Vagina (tissue), 2 donors: ENCODE measurements at regions of chr10 and their contacts with region 1.

Region 1: DNA sequence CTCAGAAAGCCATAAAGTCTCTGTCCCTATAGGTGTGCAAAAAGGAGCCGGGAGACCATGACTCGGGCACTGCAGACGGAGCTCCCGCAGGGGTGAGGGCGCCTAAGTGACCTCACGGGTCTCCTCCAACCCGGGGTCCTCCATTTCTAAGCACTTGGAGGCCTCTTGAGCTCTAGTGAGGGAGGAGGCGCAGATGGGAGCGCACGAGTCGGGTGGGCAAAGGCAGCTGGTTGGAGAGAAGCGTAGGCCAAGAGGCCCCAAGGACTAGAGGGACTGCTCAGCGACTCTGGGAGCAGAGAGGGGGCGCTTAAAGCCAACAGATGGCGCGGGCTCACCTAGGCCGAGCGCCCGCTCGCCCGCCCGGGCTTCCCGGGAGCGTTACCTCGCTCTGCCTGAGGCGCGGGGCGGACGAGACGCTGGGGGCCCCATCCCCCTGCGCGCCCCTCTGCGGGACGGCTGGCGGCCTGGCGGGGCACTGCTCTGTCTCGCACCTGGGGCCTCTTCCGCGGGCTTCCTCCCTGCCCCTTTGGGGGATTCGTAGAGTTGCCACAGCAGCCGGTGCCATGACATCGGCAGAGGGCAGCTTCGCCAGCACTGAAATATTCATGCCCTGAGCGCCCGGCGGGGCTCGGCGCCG is 518 bp upstream of the CDH23 start:
- DNase-seq: peak in 1 of 2 donors; percentile 77
- H3K4me3 ChIP-seq: peak overlapping the region; percentile 48 to 67
- H3K27ac ChIP-seq: peak overlapping the region; percentile 86
- H3K4me1 ChIP-seq: peaks cover 13% of the 10 kb centered on the region
- H3K27me3 ChIP-seq: no peaks in the 10 kb centered on the region
- CTCF ChIP-seq: peak; percentile 29 to 46 (median 43)
- POLR2A ChIP-seq: no peak

Region 2: DNA sequence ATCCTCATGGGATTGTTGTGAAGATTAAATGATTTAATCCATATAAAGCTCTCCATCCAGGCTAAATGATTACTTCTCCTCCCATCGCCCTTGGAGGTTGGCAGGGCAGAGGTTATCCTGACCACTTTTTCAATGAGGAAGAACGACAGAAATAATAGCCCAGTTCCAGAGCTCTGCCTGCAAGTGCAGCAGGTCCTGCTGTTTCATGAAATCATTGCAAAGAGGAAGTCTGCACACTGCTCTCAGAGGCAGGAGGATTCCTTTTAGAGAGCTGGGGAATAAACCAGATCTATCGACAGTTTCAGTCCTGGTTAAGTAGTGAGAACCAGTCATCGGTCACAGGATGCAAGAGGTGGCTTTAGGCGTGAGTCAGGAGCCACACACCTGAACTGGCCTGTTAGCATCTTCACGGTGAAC is 24.4 kb before region 1 on chr10:
- intact Hi-C with region 1: no loop called
- DNase-seq: no peak
- H3K4me3 ChIP-seq: no peak overlapping the region
- H3K27ac ChIP-seq: no peak overlapping the region
- H3K4me1 ChIP-seq: peaks cover 2% of the 10 kb centered on the region
- H3K27me3 ChIP-seq: no peaks in the 10 kb centered on the region
- CTCF ChIP-seq: no peak
- POLR2A ChIP-seq: no peak

Region 3: DNA sequence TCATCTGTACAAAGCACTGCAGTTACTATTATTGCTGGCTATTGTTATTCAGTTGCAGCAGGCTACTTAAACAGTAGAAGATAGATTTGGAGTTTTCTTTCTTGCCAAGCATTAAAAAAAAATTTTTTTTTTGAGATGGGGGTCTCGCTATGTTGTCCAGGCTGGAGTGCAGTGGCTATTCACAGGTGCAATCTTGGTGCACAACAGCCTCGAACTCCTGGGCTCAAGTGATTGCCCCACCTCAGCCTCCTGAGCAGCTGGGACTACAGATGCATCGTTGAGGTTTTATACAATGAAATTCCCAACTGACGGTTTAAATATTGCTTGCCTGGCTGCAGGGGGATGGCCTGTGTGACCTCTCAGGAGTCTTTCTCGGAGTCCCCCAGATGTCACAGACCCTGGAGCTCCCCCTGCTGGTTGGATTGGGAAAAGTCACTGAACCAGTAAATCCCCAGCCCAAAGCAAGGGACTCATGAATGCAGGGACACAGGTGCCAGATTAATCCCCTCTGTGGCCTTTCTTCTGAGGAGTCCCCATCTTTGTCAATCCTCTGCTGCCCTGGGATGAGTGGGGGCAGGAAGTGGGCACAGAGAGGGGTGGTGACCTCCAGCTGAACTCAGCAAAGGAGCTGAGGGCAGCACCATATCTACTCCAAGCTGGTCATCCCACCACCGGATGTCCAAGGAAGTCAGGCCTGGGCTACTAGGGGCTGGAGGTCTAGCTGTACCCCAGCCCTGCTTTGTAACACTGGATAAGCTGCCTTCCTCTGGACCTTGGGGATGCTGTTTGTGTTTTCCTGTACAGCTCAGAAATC is 173.8 kb after region 1 on chr10:
- intact Hi-C with region 1: loop called (anchors 5 kb)
- DNase-seq: no peak
- H3K4me3 ChIP-seq: no peak overlapping the region
- H3K27ac ChIP-seq: no peak overlapping the region
- H3K4me1 ChIP-seq: no peaks in the 10 kb centered on the region
- H3K27me3 ChIP-seq: no peaks in the 10 kb centered on the region
- CTCF ChIP-seq: peak; percentile 88 to 89 (median 89)
- POLR2A ChIP-seq: no peak

Region 4: GRCh38 chr10:71603150-71603549 is 206.9 kb after region 1 on chr10:
- intact Hi-C with region 1: loop called (anchors 2 kb)
- DNase-seq: no peak
- H3K4me3 ChIP-seq: no peak overlapping the region
- H3K27ac ChIP-seq: no peak overlapping the region
- H3K4me1 ChIP-seq: peaks cover 16% of the 10 kb centered on the region
- H3K27me3 ChIP-seq: no peaks in the 10 kb centered on the region
- CTCF ChIP-seq: no peak
- POLR2A ChIP-seq: no peak

Region 5: DNA sequence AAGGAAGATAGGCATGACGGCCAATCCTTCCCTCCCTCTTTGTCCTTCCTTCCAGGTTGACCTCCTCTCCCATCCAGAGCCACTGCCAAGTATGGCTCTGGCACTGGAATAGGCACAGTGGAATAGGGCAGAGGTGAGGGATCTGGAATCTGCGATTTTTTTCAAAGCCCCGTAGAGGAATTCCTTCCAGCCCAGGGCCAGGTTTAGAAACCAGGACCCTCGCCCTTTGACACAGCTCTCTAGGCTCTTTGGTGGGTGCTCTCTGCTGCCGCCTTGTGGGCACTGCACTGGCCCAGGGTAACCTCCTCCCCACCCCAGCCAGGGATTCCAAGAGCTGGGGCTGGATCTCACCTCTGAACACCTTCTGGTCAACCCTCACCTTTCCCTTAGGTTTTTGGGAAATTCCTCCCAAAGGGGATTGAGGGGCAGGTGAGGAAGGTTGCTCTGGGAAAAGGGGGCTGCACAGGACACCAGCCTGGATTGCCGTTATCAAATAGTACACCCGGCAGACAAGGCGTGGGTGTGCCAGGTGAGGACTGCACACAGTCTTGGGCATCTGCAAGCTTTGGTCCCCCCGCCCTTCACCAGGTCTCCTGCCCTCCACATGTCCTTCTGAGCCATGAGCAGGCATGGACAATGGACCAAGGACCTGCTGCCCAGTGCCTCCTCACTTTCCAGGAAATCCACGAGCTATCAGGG is 300.6 kb after region 1 on chr10:
- intact Hi-C with region 1: loop called (anchors 10 kb)
- DNase-seq: no peak
- H3K4me3 ChIP-seq: no peak overlapping the region
- H3K27ac ChIP-seq: no peak overlapping the region
- H3K4me1 ChIP-seq: peaks cover 8% of the 10 kb centered on the region
- H3K27me3 ChIP-seq: no peaks in the 10 kb centered on the region
- CTCF ChIP-seq: peak; percentile 43 to 78 (median 76)
- POLR2A ChIP-seq: no peak

Region 6: GRCh38 chr10:71805776-71806703 is 409.8 kb after region 1 on chr10:
- intact Hi-C with region 1: loop called (anchors 10 kb)
- DNase-seq: no peak
- H3K4me3 ChIP-seq: no peak overlapping the region
- H3K27ac ChIP-seq: no peak overlapping the region
- H3K4me1 ChIP-seq: no peaks in the 10 kb centered on the region
- H3K27me3 ChIP-seq: no peaks in the 10 kb centered on the region
- CTCF ChIP-seq: no peak
- POLR2A ChIP-seq: no peak